A673 (cell line): ENCODE measurements at regions of chr1 and their contacts with region 1.

Region 1: GRCh38 chr1:156295391-156295947 is at the start of gene GLMP:
- DNase-seq: peak; percentile 68
- H3K4me3 ChIP-seq: peak within 1 kb of the TSS; percentile 59
- H3K27ac ChIP-seq: peak within 1 kb of the TSS; percentile 56
- H3K4me1 ChIP-seq: peaks cover 6% of the 10 kb centered on the region
- H3K27me3 ChIP-seq: no peaks in the 10 kb centered on the region
- CTCF ChIP-seq: no peak
- total RNA-seq, gene GLMP: 30.3 and 37.2 TPM in 2 replicates

Region 2: GRCh38 chr1:156282479-156283222 is 12.8 kb before region 1 on chr1 and contains the start of gene SMG5:
- CTCF ChIA-PET with region 1: interaction called, 11 read pairs
- POLR2A ChIA-PET with region 1: no interaction called
- intact Hi-C with region 1: no loop called
- DNase-seq: peak; percentile 99
- H3K4me3 ChIP-seq: peak within 1 kb of the TSS; percentile 81
- H3K27ac ChIP-seq: peak within 1 kb of the TSS; percentile 97
- H3K4me1 ChIP-seq: peaks cover 8% of the 10 kb centered on the region
- H3K27me3 ChIP-seq: no peaks in the 10 kb centered on the region
- CTCF ChIP-seq: no peak
- total RNA-seq, gene SMG5: 107 and 129 TPM in 2 replicates

Region 3: DNA sequence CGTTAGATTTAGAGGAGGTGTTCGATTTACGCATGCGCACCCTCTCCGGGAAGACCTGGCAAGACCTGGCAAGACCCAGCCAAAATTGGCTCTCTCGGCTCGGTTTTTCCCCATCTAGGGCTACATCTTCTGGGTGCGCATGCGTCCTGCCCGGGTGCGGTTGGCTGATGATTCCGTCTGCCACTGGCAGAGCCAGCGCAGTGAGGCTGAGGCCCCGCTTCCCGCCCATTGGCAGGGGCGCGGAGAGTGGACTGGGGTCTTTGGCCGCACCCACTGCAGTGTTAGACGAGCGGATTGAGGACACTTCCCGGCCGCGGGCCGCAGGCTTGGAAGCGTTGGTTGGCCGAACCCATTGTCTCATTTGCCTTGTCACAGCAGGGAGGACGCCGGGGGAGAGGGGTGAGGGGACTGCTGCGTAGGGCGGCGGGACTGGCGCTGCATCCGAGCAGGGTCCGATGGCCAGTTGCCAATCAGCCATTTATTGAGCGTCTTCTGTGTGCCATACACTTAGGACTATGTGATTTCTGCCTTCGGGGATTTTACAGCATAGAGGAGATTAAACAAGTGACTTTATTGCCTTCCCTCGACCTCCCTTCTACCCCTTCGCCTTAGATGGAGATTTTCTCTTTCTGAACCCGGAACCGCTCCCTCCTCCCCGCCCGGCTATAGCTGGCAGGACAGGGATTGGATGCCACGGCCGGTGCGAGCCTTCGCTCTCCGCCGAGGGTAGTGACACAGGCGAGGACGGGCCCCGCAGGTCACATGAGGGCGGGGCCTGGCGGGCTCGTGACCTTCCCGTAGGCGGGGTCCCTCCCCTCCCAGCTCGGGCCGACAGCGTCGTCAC is 161.4 kb after region 1 on chr1:
- CTCF ChIA-PET with region 1: no interaction called
- POLR2A ChIA-PET with region 1: no interaction called
- intact Hi-C with region 1: no loop called
- DNase-seq: peak; percentile 96
- H3K4me3 ChIP-seq: peak overlapping the region; percentile 45
- H3K27ac ChIP-seq: peak overlapping the region; percentile 8
- H3K4me1 ChIP-seq: no peaks in the 10 kb centered on the region
- H3K27me3 ChIP-seq: no peaks in the 10 kb centered on the region
- CTCF ChIP-seq: no peak